Brain microvascular endothelial cell (primary cell): ENCODE measurements at regions of chr9 and their contacts with region 1.

Region 1: DNA sequence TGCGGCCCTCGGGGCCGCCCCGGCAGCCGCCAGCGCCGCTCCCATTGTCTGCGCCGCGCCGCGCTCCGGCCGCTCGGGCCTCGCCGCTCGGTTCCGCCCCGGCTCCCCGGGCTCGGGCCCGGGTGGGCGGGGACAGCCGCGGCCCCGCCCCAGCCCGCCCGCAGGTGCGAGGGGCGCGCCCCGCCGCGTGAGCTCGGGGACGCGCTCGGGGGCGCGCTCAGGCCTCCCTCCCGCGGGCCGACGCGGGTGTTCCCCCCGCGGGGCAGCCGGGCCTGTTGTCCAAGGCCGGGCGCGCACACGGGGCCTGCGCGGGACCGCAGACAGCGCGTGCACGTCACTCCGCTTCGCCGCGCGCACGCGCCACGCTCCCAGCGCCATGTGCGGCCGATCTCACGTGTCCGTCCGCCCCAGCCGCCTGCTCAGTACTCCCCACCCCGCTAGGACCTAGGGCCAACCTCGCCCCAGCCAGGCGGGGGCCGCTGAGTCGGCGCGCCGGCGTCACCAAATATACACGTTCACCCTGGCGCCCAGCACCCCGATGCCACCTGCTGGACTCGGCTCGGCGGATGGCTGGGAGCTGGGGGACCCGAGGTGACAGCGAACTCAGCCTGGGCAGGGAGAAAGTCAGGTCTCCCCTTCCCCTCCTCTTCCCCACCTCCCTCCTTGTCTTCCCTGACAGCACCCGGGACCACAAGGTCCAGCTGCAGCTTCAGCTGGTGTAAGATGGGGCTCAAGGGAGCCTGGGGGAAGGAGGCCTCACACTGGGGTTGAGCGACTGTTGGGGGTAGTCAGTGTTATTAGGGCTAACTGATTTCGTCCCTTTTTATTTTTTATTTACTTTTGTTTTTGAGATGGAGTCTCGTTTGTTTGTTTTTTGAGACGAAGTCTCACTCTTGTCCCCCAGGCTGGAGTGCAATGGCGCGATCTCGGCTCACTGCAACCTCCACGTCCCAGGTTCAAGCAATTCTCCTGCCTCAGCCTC is 14.3 kb downstream of the GBGT1 start:
- DNase-seq: peak; percentile 71
- H3K4me3 ChIP-seq: peak overlapping the region; percentile 73
- H3K27ac ChIP-seq: peak overlapping the region; percentile 20
- H3K27me3 ChIP-seq: no peaks in the 10 kb centered on the region
- CTCF ChIP-seq: peak; percentile 37

Region 2: DNA sequence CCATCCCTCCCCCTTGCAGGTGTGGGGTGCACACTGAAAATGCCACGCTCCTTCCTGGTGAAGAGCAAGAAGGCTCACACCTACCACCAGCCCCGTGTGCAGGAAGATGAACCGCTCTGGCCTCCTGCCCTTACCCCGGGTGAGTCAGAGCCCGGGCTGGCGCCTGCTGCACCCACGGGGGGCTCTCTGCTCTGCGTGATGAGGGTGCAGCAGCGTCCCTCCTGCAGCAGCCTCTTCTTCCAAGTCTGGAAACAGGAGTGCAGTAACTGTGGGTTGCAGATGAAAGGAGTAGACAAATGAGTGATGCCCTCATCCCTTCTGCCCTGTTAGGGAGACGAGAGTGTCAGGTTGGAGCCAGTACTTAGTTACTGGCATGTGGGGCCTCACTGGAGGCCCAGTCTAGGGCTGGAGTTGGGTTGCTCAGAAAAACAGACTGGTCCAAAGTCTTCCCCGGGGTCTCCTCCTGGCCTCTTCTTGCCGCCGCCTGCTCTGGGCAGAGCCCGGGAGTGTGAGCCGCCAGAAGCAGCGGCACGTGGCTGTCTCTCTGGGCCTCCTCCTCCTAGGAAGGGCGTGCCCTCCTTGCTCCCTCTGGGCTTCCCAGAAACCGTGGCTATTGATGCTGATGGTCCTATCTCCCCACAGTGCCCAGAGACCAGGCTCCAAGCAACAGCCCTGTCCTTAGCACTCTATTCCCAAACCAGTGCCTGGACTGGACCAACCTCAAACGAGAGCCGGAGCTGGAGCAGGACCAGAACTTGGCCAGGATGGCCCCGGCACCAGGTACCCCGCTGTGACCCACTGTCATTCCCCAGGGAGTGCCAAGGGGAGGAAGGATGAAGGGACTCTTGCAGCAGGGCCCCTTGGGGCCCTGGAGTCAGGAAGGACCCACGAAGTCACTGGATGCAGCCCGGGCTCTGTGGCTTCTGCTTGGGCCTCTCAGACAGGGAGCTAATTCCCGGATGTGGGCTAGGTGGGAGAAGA is 162.5 kb before region 1 on chr9:
- in situ Hi-C with region 1: no loop called
- DNase-seq: no peak
- H3K4me3 ChIP-seq: no peak overlapping the region
- H3K27ac ChIP-seq: no peak overlapping the region
- H3K27me3 ChIP-seq: peaks cover 30% of the 10 kb centered on the region
- CTCF ChIP-seq: no peak

Region 3: GRCh38 chr9:133030317-133031129 is 118.9 kb before region 1 on chr9 and contains the start of gene GTF3C5:
- in situ Hi-C with region 1: loop called (anchors 25 kb)
- DNase-seq: peak; percentile 97
- H3K4me3 ChIP-seq: peak within 1 kb of the TSS; percentile 94
- H3K27ac ChIP-seq: peak within 1 kb of the TSS; percentile 87
- H3K27me3 ChIP-seq: no peaks in the 10 kb centered on the region
- CTCF ChIP-seq: no peak

Region 4: DNA sequence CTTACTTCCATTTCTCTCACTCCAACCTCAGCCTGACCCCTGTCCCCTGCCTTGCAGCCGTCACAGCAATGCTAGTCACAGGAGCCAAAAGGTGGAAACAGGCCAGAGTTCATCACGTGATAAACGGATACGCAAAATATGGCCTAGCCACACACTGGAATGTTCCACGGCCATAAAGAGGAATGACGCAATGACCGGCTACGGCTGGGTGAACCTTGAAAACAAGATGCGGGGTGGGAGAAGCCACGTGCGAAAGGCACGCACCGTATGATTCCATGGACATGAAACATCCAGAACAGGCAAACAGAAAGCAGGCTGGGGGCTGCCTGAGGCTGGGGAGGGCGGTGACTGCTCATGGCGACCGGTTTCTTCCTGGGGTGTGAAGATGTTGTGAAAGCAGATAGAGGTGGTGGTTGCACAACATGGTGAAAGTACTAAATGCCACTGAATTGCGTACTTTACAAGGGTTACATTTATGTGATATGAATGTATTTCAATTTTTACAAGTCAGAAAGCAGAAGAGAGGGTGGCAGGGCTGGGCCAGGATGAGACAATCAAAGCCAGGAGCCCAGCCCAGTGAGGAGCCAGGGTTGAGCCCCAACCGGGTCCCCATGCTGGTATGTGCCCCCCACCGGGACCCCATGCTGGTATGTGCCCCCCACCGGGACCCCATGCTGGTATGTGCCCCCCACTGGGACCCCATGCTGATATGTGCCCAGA is 706.5 kb after region 1 on chr9:
- in situ Hi-C with region 1: no loop called
- DNase-seq: peak; percentile 85
- H3K4me3 ChIP-seq: no peak overlapping the region
- H3K27ac ChIP-seq: peak overlapping the region; percentile 20
- H3K27me3 ChIP-seq: no peaks in the 10 kb centered on the region
- CTCF ChIP-seq: no peak